ENCODE measurements at regions of chr1 and their contacts with region 1.

Region 1: GRCh38 chr1:205523891-205524793 is 19.7 kb downstream of the CDK18 start:
- DNase-seq: peak; percentile 89
- ATAC-seq: peak; percentile 29
- H3K4me3 Mint-ChIP-seq: no peak overlapping the region
- H3K27ac Mint-ChIP-seq: no peak overlapping the region
- H3K4me1 Mint-ChIP-seq: peaks cover 45% of the 10 kb centered on the region
- H3K27me3 Mint-ChIP-seq: no peaks in the 10 kb centered on the region; the same call in none of the 2 replicates
- CTCF ChIP-seq: peak; percentile 81

Region 2: GRCh38 chr1:205422993-205423625 is 101.0 kb before region 1 on chr1:
- CTCF ChIA-PET with region 1: interaction called, 14 read pairs
- POLR2A ChIA-PET with region 1: no interaction called
- DNase-seq: no peak
- ATAC-seq: no peak
- H3K4me3 Mint-ChIP-seq: no peak overlapping the region
- H3K27ac Mint-ChIP-seq: no peak overlapping the region
- H3K4me1 Mint-ChIP-seq: peaks cover 42% of the 10 kb centered on the region
- H3K27me3 Mint-ChIP-seq: peaks cover 37% of the 10 kb centered on the region
- CTCF ChIP-seq: no peak

Region 3: DNA sequence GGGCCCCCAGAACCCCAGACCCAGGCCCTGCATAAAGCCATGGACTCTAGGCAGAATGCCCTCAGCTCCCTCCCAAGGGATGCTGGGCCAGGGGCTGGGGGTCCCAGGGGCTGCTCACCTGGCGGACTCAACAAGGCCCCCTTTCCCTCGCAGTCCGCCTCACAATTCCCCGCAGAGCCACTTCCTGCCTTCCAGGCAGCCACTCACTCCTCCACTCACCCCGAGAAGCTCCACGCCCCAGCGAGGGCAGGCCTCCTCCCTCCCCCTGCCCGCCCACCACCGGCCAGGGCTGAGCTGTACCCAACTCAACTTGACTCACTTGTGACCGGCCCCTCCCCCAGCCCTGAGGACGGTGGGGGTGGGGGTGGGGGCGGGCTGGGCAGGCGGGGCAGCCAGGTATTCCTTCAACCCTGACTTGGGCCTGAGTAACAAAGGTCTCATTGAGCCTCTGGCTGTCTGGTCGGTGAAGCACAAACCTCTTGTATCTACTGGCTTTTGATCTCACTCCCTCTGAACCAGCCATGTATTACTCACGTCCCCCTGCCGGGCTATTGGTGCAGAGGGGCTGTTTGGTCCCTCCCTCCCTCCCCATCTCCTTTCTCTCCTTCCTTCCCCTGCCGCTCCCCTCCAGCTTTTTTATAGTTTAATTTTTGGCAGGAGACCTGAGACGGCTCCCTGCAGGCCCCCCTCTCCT is 74.2 kb before region 1 on chr1:
- CTCF ChIA-PET with region 1: interaction called, 40 read pairs
- POLR2A ChIA-PET with region 1: no interaction called
- DNase-seq: peak; percentile 74
- ATAC-seq: peak; percentile 13
- H3K4me3 Mint-ChIP-seq: peak overlapping the region; percentile 74
- H3K27ac Mint-ChIP-seq: peak overlapping the region; percentile 72
- H3K4me1 Mint-ChIP-seq: peaks cover 93% of the 10 kb centered on the region
- H3K27me3 Mint-ChIP-seq: peaks cover 13% of the 10 kb centered on the region
- CTCF ChIP-seq: no peak

Region 4: DNA sequence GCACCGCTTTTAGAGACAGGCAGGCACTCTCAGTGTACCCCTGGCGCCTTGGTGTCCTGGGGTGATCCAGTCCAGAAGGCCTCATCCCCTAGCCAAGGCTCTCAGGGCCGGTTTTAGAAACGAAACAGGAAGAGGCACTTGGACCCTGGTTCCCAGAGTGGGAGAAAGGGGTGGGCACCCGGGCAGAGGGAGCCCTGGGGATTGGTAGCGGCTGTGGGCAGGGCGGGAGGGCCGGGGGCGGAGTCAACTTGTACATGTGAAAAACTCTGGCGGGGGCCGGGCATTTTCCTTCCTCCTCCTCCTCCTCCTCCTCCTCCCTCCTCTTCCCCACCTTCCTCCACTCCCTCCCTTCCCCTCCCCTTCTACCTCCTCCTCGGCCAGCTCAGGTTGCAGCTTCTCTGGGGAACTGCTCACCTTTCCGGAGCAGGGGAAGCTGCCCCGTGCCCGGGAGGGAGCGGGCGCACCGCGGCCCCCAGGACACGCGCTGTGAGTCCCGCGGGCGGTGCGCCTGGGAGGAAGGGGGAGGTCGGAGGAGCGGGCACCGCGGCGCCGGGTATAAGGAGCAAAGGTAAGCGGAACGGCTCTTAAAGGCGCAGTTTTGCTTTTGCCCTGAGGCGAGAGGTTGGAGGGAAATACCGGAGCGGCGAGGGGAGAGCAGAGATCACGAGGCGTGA is 19.7 kb before region 1 on chr1 and contains the start of gene CDK18:
- CTCF ChIA-PET with region 1: interaction called, 613 read pairs
- POLR2A ChIA-PET with region 1: no interaction called
- DNase-seq: peak; percentile 85
- ATAC-seq: peak; percentile 80
- H3K4me3 Mint-ChIP-seq: peak within 1 kb of the TSS; percentile 85
- H3K27ac Mint-ChIP-seq: peak within 1 kb of the TSS; percentile 19; the same call in 1 of the 2 replicates
- H3K4me1 Mint-ChIP-seq: peaks cover 57% of the 10 kb centered on the region
- H3K27me3 Mint-ChIP-seq: no peaks in the 10 kb centered on the region
- CTCF ChIP-seq: no peak
- total RNA-seq, gene CDK18: 62.1 to 71.9 TPM (median 64.7 TPM) in 3 replicates

Region 5: GRCh38 chr1:205543411-205544301 is 19.5 kb after region 1 on chr1:
- CTCF ChIA-PET with region 1: interaction called, 28 read pairs
- POLR2A ChIA-PET with region 1: interaction called, 3 read pairs
- DNase-seq: peak; percentile 71
- ATAC-seq: peak; percentile 86
- H3K4me3 Mint-ChIP-seq: peak overlapping the region; percentile 67
- H3K27ac Mint-ChIP-seq: peak overlapping the region; percentile 95
- H3K4me1 Mint-ChIP-seq: peaks cover 14% of the 10 kb centered on the region
- H3K27me3 Mint-ChIP-seq: peaks cover 78% of the 10 kb centered on the region
- CTCF ChIP-seq: no peak

Region 6: GRCh38 chr1:205591522-205592351 is 67.6 kb after region 1 on chr1:
- CTCF ChIA-PET with region 1: interaction called, 25 read pairs
- POLR2A ChIA-PET with region 1: no interaction called
- DNase-seq: peak; percentile 97
- ATAC-seq: peak; percentile 86
- H3K4me3 Mint-ChIP-seq: peak overlapping the region; percentile 72
- H3K27ac Mint-ChIP-seq: peak overlapping the region; percentile 50; the same call in 1 of the 2 replicates
- H3K4me1 Mint-ChIP-seq: peaks cover 8% of the 10 kb centered on the region
- H3K27me3 Mint-ChIP-seq: peaks cover 10% of the 10 kb centered on the region
- CTCF ChIP-seq: peak; percentile 78